Endothelial cell of umbilical vein (primary cell): ENCODE measurements at regions of chr17 and their contacts with region 1.

Region 1: DNA sequence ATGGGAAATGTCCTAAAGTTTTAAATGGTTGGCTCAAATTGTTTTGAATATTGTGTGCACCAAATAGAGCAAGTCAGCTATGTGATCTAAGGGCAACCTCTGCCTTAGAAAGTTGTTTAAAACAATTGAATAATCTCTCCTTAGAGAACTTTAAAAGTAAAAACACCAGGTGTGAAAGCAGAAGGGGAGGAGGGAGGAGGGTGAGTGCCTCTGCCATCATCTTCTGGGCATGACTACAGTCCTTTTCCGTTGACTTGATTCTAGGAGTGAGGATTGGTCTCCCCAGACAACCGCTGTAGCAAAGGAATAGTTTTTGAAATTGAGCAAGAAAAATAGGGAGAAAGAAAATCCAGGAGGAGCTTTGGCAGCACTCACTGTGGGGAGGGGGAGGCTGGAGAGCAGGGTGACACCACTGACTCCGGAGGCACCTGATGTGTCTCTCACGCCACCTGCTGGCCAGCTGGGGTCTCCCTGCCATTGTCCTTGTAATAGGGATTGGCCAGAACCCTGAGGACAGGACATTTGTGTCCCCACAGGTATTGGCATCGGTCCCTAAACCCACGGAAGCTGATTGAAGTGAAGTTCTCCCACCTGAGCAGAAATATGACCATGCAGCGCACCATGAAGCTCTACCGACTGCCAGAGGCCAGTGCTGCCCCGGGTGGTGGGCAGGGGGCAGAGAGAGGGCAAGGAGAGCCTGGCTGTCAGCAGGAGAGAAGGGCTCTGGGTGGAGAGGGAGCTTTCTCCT is 33.3 kb downstream of the PLCD3 start:
- DNase-seq: peak; percentile 73
- H3K4me3 ChIP-seq: no peak overlapping the region
- H3K27ac ChIP-seq: no peak overlapping the region
- H3K4me1 ChIP-seq: peaks cover under 1% of the 10 kb centered on the region
- H3K27me3 ChIP-seq: no peaks in the 10 kb centered on the region
- CTCF ChIP-seq: peak; percentile 84 to 91
- POLR2A ChIP-seq: no peak

Region 2: DNA sequence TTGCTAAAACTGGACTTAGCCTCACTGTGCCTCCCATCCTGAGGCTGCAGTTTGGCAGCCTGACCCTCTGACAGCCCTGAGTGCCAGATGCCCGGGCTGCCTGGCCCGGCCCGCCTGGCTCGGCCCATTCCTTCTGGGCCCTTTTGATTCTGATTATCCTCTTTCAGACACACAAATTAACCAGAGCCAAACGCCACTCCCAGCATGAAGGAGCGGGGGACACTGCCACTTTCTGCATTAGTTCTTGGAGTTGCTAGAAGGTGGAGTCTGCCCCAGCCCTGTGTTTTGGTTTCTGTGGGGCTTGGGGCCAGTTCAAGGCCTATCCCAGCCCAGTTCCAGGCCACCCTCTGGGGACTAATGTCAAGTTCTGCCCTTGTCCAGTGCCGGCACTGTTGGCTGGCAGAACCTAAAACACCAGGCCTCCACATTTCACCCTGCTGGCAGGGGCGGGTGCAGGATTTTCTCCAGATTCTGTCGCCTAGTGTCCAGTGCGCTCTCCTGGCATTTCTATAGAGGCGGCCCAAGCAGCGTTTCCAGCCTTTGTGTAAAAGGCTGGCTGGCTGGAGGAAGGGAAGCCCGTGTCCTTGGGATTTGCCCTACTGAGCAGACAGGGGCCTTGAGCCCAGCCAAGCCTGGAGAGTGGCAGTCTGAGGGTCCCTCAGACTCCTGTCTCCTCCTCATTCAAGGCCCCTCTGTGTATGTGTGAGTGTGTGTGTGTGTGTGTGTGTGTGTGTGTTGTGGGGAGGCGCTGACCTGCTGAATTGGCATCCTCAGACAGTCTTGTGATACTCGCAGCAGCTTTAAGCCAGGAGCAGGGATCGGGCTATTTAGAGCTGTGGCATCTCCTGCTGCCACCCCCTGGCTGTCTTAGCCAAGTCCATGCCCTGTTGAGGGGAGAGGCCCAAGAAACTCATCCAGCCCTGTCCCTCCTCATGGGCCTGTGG is 11.9 kb after region 1 on chr17:
- CTCF ChIA-PET with region 1: interaction called, 11 read pairs
- POLR2A ChIA-PET with region 1: no interaction called
- dilution Hi-C with region 1: no loop called
- intact Hi-C with region 1: no loop called
- DNase-seq: no peak
- H3K4me3 ChIP-seq: no peak overlapping the region
- H3K27ac ChIP-seq: no peak overlapping the region
- H3K4me1 ChIP-seq: no peaks in the 10 kb centered on the region
- H3K27me3 ChIP-seq: no peaks in the 10 kb centered on the region
- CTCF ChIP-seq: no peak
- POLR2A ChIP-seq: no peak

Region 3: DNA sequence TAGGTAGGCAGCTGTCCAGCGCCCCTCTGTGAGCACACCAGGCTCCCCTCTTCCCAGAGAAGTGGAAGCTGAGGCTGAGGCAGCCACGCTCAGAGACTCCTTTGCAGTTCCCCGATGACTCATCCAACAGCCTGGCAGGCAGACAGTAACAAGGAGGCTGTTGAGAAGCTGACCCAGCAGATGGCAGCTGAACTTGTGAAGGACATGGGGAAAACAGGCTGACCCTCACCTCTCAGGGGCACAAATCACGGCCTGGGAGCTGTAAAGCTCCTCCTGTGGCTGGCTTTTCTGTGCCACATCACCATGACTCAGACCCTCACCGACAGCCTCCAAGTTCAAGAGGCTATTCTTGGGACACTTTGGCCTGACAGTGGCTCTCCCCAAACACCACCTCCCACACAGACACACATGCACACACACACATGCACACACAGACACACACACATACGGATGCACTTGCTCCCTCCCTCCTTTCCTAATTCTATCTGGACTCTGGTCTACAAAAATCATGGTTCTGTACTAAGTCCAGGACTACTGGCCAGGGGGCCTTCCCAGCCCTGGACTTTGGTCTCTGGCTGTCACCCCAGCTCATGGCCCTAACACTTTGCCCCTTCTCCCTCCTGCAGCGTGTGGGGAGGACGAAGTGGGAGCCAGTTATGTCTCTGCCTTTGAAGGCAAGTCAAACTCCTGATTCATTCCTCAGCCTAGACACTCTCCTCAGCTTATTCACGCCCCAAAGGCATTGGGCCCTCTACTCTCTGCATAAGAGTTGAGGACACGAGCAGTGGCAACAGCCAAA is 194.6 kb after region 1 on chr17:
- CTCF ChIA-PET with region 1: no interaction called
- POLR2A ChIA-PET with region 1: no interaction called
- dilution Hi-C with region 1: no loop called
- intact Hi-C with region 1: no loop called
- DNase-seq: peak; percentile 94
- H3K4me3 ChIP-seq: no peak overlapping the region
- H3K27ac ChIP-seq: peak overlapping the region; percentile 50
- H3K4me1 ChIP-seq: peaks cover 45% of the 10 kb centered on the region
- H3K27me3 ChIP-seq: no peaks in the 10 kb centered on the region
- CTCF ChIP-seq: peak; percentile 5 to 30
- POLR2A ChIP-seq: peak; percentile 41